IMR-90 (cell line): ENCODE measurements at regions of chr17 and their contacts with region 1.

Region 1: DNA sequence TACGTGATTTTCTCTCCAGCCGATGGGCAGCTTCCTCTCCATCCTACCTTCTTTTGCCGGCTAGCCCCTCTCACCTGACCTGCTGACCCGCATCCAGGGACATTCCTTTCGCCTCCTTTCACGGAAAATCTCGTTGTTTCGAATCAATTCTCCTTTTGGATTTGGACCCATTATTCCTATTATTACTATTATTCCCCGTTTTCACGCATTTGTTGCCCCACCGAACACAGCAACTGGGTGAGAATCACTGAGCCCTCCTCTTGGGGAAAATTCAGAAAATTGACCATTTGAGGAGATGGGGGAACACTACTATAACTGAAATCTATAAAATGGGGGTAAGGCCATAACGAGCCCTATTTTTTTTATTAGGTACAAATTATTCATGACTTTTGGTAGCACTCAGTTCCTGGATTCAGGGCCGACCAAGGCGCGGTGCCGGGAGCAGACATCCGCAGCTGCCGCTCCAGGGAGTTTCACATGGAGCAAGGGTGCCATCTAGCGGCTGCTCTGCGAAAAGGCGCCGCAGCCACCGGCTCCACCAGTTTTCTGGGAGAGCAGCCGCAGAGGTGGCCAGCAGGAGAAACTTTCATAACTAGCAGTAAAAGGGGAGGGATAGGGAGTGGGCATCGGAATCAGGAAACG is 3.3 kb upstream of the HOXB8 start:
- DNase-seq: peak; percentile 79
- ATAC-seq: peak; percentile 93
- H3K4me3 ChIP-seq: no peak overlapping the region
- H3K27ac ChIP-seq: no peak overlapping the region
- H3K4me1 ChIP-seq: no peaks in the 10 kb centered on the region; the same call in 1 of the 2 replicates
- H3K27me3 ChIP-seq: peaks cover 79% of the 10 kb centered on the region
- CTCF ChIP-seq: peak; percentile 98
- POLR2A ChIP-seq: peak; percentile 57; the same call in 1 of the 2 replicates
- RAD21 ChIP-seq: peak; percentile 97

Region 2: DNA sequence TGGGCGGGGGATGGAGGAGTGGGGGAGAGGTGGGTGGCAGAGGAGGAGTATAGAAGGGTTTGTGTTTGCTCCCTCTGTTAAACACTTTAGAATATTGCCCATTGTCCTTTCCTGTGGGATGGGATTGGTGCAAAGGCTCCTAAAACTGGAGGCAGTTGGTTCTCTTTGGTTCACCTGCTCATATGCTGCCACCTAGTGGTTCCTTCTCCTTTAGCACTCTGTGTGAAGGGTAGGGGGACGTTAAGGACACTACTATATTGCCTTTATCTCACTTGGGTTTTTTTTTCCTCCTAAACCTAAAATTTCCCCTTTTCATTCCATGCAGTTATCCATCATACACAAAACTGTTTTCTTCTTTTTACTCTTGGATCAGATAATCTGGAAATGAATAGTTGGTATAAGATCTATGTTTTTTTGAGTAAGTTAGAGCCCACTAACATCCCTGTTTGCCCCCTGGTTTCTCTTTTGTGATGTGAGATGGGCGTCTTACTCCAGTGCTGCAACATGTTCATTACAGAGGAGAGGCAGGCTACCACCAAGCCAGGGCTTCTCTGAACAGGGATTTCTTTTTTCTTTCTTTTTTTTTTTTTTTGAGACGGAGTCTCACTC is 487.1 kb before region 1 on chr17:
- CTCF ChIA-PET with region 1: no interaction called
- POLR2A ChIA-PET with region 1: no interaction called
- dilution Hi-C with region 1: no loop called
- in situ Hi-C with region 1: no loop called
- intact Hi-C with region 1: loop called (anchors 2 kb)
- DNase-seq: peak; percentile 66
- ATAC-seq: peak; percentile 91
- H3K4me3 ChIP-seq: no peak overlapping the region
- H3K27ac ChIP-seq: no peak overlapping the region
- H3K4me1 ChIP-seq: no peaks in the 10 kb centered on the region
- H3K27me3 ChIP-seq: peaks cover 11% of the 10 kb centered on the region
- CTCF ChIP-seq: peak; percentile 86
- POLR2A ChIP-seq: no peak
- RAD21 ChIP-seq: peak; percentile 87

Region 3: GRCh38 chr17:48153691-48154358 is 464.6 kb before region 1 on chr17:
- CTCF ChIA-PET with region 1: no interaction called
- POLR2A ChIA-PET with region 1: no interaction called
- dilution Hi-C with region 1: no loop called
- in situ Hi-C with region 1: no loop called
- intact Hi-C with region 1: loop called (anchors 2 kb)
- DNase-seq: peak; percentile 54
- ATAC-seq: peak; percentile 77
- H3K4me3 ChIP-seq: no peak overlapping the region
- H3K27ac ChIP-seq: no peak overlapping the region
- H3K4me1 ChIP-seq: no peaks in the 10 kb centered on the region
- H3K27me3 ChIP-seq: peaks cover 61% of the 10 kb centered on the region
- CTCF ChIP-seq: peak; percentile 55
- POLR2A ChIP-seq: no peak
- RAD21 ChIP-seq: peak; percentile 63

Region 4: GRCh38 chr17:48262995-48263730 is 355.2 kb before region 1 on chr17:
- CTCF ChIA-PET with region 1: interaction called, 4 read pairs
- POLR2A ChIA-PET with region 1: no interaction called
- dilution Hi-C with region 1: no loop called
- in situ Hi-C with region 1: no loop called
- intact Hi-C with region 1: loop called (anchors 2 kb)
- DNase-seq: peak; percentile 17
- ATAC-seq: no peak
- H3K4me3 ChIP-seq: no peak overlapping the region
- H3K27ac ChIP-seq: no peak overlapping the region
- H3K4me1 ChIP-seq: no peaks in the 10 kb centered on the region
- H3K27me3 ChIP-seq: peaks cover 16% of the 10 kb centered on the region
- CTCF ChIP-seq: peak; percentile 31
- POLR2A ChIP-seq: no peak
- RAD21 ChIP-seq: no peak

Region 5: DNA sequence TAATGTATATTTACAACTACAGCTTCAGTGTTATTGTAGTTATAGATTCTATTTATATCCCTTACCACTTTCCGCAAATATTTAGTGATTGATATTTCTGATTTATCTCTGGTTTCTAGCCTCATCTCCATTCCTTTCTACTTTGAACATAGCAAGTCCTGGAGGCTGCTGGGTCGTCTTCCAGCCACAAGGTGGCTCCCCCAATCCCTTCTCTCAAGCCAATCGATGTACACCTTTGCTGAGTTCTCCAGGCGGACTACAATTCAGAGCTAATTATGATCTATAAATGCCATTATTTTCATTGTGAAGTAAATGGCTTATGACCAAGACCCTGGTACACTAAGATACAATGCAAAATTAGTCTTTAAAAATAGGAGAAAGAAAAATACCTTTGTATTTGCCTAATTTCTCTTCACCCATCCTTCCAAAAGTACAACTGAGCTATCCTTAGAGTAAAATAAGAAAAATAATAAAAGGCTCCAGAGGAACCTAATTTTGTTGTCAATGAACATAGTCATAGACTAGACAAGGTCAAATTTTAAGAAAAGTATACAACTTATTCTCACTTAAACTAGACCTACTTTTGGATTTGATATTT is 310.5 kb before region 1 on chr17:
- CTCF ChIA-PET with region 1: no interaction called
- POLR2A ChIA-PET with region 1: no interaction called
- dilution Hi-C with region 1: no loop called
- in situ Hi-C with region 1: no loop called
- intact Hi-C with region 1: loop called (anchors 1 kb)
- DNase-seq: peak; percentile 74
- ATAC-seq: peak; percentile 87
- H3K4me3 ChIP-seq: no peak overlapping the region
- H3K27ac ChIP-seq: no peak overlapping the region
- H3K4me1 ChIP-seq: no peaks in the 10 kb centered on the region
- H3K27me3 ChIP-seq: peaks cover 52% of the 10 kb centered on the region
- CTCF ChIP-seq: peak; percentile 80
- POLR2A ChIP-seq: no peak
- RAD21 ChIP-seq: peak; percentile 69

Region 6: GRCh38 chr17:48335858-48336500 is 282.4 kb before region 1 on chr17:
- CTCF ChIA-PET with region 1: interaction called, 6 read pairs
- POLR2A ChIA-PET with region 1: no interaction called
- dilution Hi-C with region 1: no loop called
- in situ Hi-C with region 1: no loop called
- intact Hi-C with region 1: loop called (anchors 1 kb)
- DNase-seq: peak; percentile 71
- ATAC-seq: peak; percentile 74
- H3K4me3 ChIP-seq: no peak overlapping the region
- H3K27ac ChIP-seq: no peak overlapping the region
- H3K4me1 ChIP-seq: 0 out of 2 replicates have a peak, but pooled peaks cover 1% of the 10 kb centered on the region
- H3K27me3 ChIP-seq: peaks cover 40% of the 10 kb centered on the region
- CTCF ChIP-seq: peak; percentile 82
- POLR2A ChIP-seq: no peak
- RAD21 ChIP-seq: peak; percentile 73

Region 7: GRCh38 chr17:48406936-48407567 is 211.3 kb before region 1 on chr17:
- CTCF ChIA-PET with region 1: no interaction called
- POLR2A ChIA-PET with region 1: no interaction called
- dilution Hi-C with region 1: no loop called
- in situ Hi-C with region 1: no loop called
- intact Hi-C with region 1: no loop called
- DNase-seq: no peak
- ATAC-seq: no peak
- H3K4me3 ChIP-seq: no peak overlapping the region
- H3K27ac ChIP-seq: no peak overlapping the region
- H3K4me1 ChIP-seq: no peaks in the 10 kb centered on the region
- H3K27me3 ChIP-seq: peaks cover 26% of the 10 kb centered on the region
- CTCF ChIP-seq: no peak
- POLR2A ChIP-seq: no peak
- RAD21 ChIP-seq: no peak

Region 8: GRCh38 chr17:48561884-48562810 is 56.2 kb before region 1 on chr17:
- CTCF ChIA-PET with region 1: no interaction called
- POLR2A ChIA-PET with region 1: no interaction called
- dilution Hi-C with region 1: no loop called
- in situ Hi-C with region 1: no loop called
- intact Hi-C with region 1: no loop called
- DNase-seq: peak; percentile 68
- ATAC-seq: no peak
- H3K4me3 ChIP-seq: no peak overlapping the region; the same call in 1 of the 2 replicates
- H3K27ac ChIP-seq: peak overlapping the region; percentile 93
- H3K4me1 ChIP-seq: peaks cover 79% of the 10 kb centered on the region
- H3K27me3 ChIP-seq: no peaks in the 10 kb centered on the region
- CTCF ChIP-seq: peak; percentile 46
- POLR2A ChIP-seq: no peak
- RAD21 ChIP-seq: peak; percentile 35; the same call in 1 of the 2 replicates

Region 9: DNA sequence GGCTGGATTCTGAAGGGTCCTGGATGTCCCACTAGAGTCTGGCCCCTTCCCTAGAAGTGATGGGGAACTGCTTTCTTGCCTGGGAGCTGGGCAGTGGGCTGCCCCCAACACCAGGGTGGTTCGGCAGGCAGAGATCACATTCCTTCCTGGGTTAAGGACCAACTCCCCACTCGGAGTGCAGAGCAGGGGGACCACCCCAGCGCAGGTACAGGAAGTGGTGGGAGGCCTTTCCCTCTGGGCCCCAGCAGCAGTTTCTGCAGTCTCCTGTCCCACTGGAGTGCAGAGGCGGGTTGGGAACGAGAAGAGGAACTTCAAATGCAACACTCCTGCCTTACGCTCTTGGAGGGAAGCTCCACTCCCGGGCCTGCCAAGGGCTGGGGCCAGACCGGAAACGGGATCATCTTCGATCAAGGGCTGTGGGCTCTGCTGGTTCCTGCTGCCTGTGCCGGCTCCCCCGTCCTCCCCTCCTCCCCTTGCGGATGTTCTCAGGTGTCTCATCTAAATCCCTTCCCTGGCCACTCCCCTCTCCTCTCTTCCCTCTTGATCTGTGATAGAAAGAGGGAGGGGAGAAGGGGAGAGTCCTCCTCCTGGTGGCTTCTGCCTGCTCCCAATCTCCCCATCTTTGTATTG is 867.8 kb after region 1 on chr17:
- CTCF ChIA-PET with region 1: no interaction called
- POLR2A ChIA-PET with region 1: no interaction called
- dilution Hi-C with region 1: no loop called
- in situ Hi-C with region 1: no loop called
- intact Hi-C with region 1: no loop called
- DNase-seq: no peak
- ATAC-seq: no peak
- H3K4me3 ChIP-seq: no peak overlapping the region
- H3K27ac ChIP-seq: no peak overlapping the region
- H3K4me1 ChIP-seq: no peaks in the 10 kb centered on the region
- H3K27me3 ChIP-seq: peaks cover 89% of the 10 kb centered on the region
- CTCF ChIP-seq: no peak
- POLR2A ChIP-seq: no peak
- RAD21 ChIP-seq: no peak